WTC11 (cell line): ENCODE measurements at regions of chr4 and their contacts with region 1.

Region 1: GRCh38 chr4:152500800-152501434 is 35.0 kb downstream of the FBXW7 start:
- DNase-seq: peak; percentile 25
- ATAC-seq: peak; percentile 68
- H3K4me3 Mint-ChIP-seq: no peak overlapping the region
- H3K27ac Mint-ChIP-seq: no peak overlapping the region
- H3K4me1 Mint-ChIP-seq: peaks cover 33% of the 10 kb centered on the region
- H3K27me3 Mint-ChIP-seq: no peaks in the 10 kb centered on the region
- CTCF ChIP-seq: peak; percentile 47; the same call in 1 of the 2 replicates

Region 2: GRCh38 chr4:152515678-152516077 is 14.8 kb after region 1 on chr4:
- CTCF ChIA-PET with region 1: interaction called, 24 read pairs
- POLR2A ChIA-PET with region 1: no interaction called
- DNase-seq: no peak
- ATAC-seq: no peak; the same call in 1 of the 2 replicates
- H3K4me3 Mint-ChIP-seq: no peak overlapping the region
- H3K27ac Mint-ChIP-seq: no peak overlapping the region
- H3K4me1 Mint-ChIP-seq: peaks cover 40% of the 10 kb centered on the region
- H3K27me3 Mint-ChIP-seq: no peaks in the 10 kb centered on the region
- CTCF ChIP-seq: no peak

Region 3: DNA sequence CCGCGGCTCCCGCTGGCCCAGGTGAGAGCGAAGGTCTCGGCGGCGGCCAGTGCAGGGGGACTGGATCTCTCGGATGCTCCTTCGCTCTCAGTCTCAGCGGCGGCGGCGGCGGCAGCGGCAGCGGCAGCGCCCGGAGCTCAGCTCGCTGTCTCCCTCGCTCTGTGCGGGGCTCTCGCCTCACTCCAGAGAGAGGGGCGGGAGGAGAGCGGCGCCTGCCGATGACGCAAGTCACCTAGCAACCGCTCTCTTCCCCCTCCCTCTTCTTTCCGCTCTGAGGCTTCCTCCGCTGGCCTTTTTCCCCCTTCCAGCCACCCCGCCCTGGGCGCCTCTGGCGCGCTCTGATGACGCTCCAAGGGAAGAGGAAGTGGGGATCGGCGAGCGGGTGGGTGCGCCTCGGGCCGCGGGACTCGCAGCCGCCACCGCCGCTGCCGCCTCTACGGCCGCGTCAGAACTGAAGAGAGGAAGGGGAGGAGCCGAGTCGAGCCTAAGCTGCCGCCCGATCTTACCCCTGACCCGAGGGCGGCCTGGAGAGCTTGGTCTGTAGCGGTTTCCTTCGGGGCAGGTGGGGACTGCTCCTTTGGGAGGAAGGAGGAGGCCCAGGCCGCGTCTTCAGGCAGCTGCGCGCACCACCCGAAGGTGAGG is 35.1 kb after region 1 on chr4 and contains the start of gene FBXW7:
- CTCF ChIA-PET with region 1: interaction called, 28 read pairs
- POLR2A ChIA-PET with region 1: no interaction called
- DNase-seq: peak; percentile 100
- ATAC-seq: peak; percentile 89
- H3K4me3 Mint-ChIP-seq: peak within 1 kb of the TSS; percentile 98
- H3K27ac Mint-ChIP-seq: peak within 1 kb of the TSS; percentile 99
- H3K4me1 Mint-ChIP-seq: peaks cover 32% of the 10 kb centered on the region
- H3K27me3 Mint-ChIP-seq: no peaks in the 10 kb centered on the region; the same call in 1 of the 2 replicates
- CTCF ChIP-seq: no peak
- total RNA-seq, gene FBXW7: 20.7 to 23.0 TPM (median 22.2 TPM) in 3 replicates

Region 4: DNA sequence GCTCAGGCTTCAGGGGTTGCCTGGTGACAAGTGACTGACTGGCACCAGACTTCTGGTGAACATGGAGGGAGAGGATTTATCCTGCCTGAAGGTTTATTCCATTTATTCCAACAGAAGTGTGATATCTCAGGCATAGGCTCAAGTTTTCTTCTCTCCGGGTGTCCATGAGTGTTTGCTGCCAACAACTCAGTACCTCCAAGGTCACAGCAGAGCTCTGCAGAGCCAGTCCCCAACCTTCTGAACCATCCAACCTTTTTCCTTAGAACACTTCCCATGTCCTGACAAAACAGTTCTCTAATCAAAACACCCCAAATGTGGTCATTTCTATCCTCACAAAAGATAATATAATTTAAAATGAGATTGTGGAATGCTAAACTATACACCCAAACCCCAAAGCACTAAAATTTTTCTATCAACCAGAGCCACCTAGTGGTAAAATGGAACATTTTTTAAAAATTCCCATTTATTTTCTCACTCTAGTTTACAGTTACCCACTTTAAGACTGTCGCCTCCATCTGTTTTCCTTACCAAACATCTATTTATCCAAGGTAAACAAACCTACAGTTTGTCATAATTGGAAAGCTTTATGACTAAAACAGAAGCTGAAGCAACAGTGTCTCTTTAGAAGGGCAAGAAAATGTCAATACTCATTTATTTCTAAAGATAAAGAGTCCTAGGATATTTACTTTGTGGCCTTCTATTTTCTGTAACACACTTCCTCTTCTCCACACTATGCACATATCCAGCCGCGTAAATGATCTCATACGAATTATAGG is 139.3 kb after region 1 on chr4:
- CTCF ChIA-PET with region 1: interaction called, 23 read pairs
- POLR2A ChIA-PET with region 1: no interaction called
- DNase-seq: no peak
- ATAC-seq: peak; percentile 49
- H3K4me3 Mint-ChIP-seq: no peak overlapping the region
- H3K27ac Mint-ChIP-seq: no peak overlapping the region
- H3K4me1 Mint-ChIP-seq: peaks cover 45% of the 10 kb centered on the region
- H3K27me3 Mint-ChIP-seq: no peaks in the 10 kb centered on the region
- CTCF ChIP-seq: peak; percentile 55

Region 5: DNA sequence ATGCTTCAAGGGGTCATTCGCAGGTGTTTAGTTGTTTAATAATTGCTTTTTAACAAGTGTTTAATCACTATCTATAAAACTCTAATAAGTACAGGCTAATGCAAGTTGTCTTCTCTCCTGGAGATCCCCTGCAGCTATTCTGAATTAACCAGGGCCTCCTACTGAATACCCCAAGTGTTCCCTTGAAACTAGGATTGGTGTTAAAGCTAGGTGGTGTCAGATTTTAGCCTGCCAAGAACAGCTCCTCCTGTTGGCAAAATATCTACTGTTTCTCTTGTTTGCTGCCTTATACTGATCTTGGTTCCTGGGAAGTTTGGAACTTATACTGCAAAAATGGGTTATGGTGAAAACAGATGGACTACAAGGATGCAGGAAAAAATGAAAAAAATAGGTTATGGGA is 205.0 kb after region 1 on chr4:
- CTCF ChIA-PET with region 1: interaction called, 27 read pairs
- POLR2A ChIA-PET with region 1: no interaction called
- DNase-seq: no peak
- ATAC-seq: peak; percentile 70
- H3K4me3 Mint-ChIP-seq: no peak overlapping the region
- H3K27ac Mint-ChIP-seq: peak overlapping the region; percentile 25; the same call in 1 of the 2 replicates
- H3K4me1 Mint-ChIP-seq: peaks cover 66% of the 10 kb centered on the region
- H3K27me3 Mint-ChIP-seq: no peaks in the 10 kb centered on the region
- CTCF ChIP-seq: no peak

Region 6: GRCh38 chr4:152779513-152780266 is 278.8 kb after region 1 on chr4 and contains the starts of genes ARFIP1 and TIGD4:
- CTCF ChIA-PET with region 1: interaction called, 16 read pairs
- POLR2A ChIA-PET with region 1: no interaction called
- DNase-seq: peak; percentile 99
- ATAC-seq: peak; percentile 93
- H3K4me3 Mint-ChIP-seq: peak within 1 kb of the TSS; percentile 99
- H3K27ac Mint-ChIP-seq: peak within 1 kb of the TSS; percentile 100
- H3K4me1 Mint-ChIP-seq: peaks cover 27% of the 10 kb centered on the region
- H3K27me3 Mint-ChIP-seq: no peaks in the 10 kb centered on the region; the same call in 1 of the 2 replicates
- CTCF ChIP-seq: no peak
- total RNA-seq, gene ARFIP1: 29.2 to 35.3 TPM (median 31.2 TPM) in 3 replicates
- total RNA-seq, gene TIGD4: 1.9 to 2.5 TPM (median 2.0 TPM) in 3 replicates